A549 (cell line): ENCODE measurements at regions of chr1 and their contacts with region 1.

Region 1: GRCh38 chr1:202184750-202185460 is 8.7 kb upstream of the LGR6 start:
- DNase-seq: peak; percentile 91 to 92
- ATAC-seq: peak; percentile 74 to 91
- H3K4me3 ChIP-seq: no peak overlapping the region
- H3K27ac ChIP-seq: peak overlapping the region in 1 of 2 experiments; percentile 42; a peak in 1 of 6 replicates
- H3K4me1 ChIP-seq: peaks cover 11% of the 10 kb centered on the region
- CTCF ChIP-seq: peak; percentile 91
- EP300 ChIP-seq: no peak
- POLR2A ChIP-seq: no peak
- RAD21 ChIP-seq: peak; percentile 78 to 84

Region 2: GRCh38 chr1:202146993-202147392 is 37.9 kb before region 1 on chr1:
- CTCF ChIA-PET with region 1: no interaction called
- POLR2A ChIA-PET with region 1: no interaction called
- DNase-seq: no peak
- ATAC-seq: no peak
- H3K4me3 ChIP-seq: no peak overlapping the region
- H3K27ac ChIP-seq: no peak overlapping the region
- H3K4me1 ChIP-seq: peaks cover 13% of the 10 kb centered on the region; the same call in 2 of the 3 replicates
- CTCF ChIP-seq: no peak
- EP300 ChIP-seq: no peak
- POLR2A ChIP-seq: no peak
- RAD21 ChIP-seq: no peak

Region 3: GRCh38 chr1:202210385-202210784 is 25.5 kb after region 1 on chr1:
- CTCF ChIA-PET with region 1: interaction called, 25 read pairs
- POLR2A ChIA-PET with region 1: no interaction called
- DNase-seq: peak in 1 of 2 experiments; percentile 52
- ATAC-seq: peak; percentile 73 to 75
- H3K4me3 ChIP-seq: no peak overlapping the region
- H3K27ac ChIP-seq: no peak overlapping the region
- H3K4me1 ChIP-seq: peaks cover 11% of the 10 kb centered on the region
- CTCF ChIP-seq: 0 out of 3 replicates have a peak, but pooled peaks have one; percentile 7
- EP300 ChIP-seq: no peak
- POLR2A ChIP-seq: no peak
- RAD21 ChIP-seq: peak in 1 of 2 experiments; percentile 29; a peak in 3 of 5 replicates

Region 4: GRCh38 chr1:202264300-202264699 is 79.4 kb after region 1 on chr1:
- CTCF ChIA-PET with region 1: interaction called, 10 read pairs
- POLR2A ChIA-PET with region 1: no interaction called
- DNase-seq: no peak
- ATAC-seq: no peak
- H3K4me3 ChIP-seq: no peak overlapping the region
- H3K27ac ChIP-seq: no peak overlapping the region
- H3K4me1 ChIP-seq: no peaks in the 10 kb centered on the region
- CTCF ChIP-seq: no peak
- EP300 ChIP-seq: no peak
- POLR2A ChIP-seq: no peak
- RAD21 ChIP-seq: no peak

Region 5: GRCh38 chr1:202291961-202292712 is 107.2 kb after region 1 on chr1:
- CTCF ChIA-PET with region 1: interaction called, 12 read pairs
- POLR2A ChIA-PET with region 1: no interaction called
- DNase-seq: peak; percentile 57 to 68
- ATAC-seq: peak; percentile 69 to 83
- H3K4me3 ChIP-seq: no peak overlapping the region
- H3K27ac ChIP-seq: peak overlapping the region; percentile 45 to 59; a peak in 5 of 6 replicates
- H3K4me1 ChIP-seq: peaks cover 22% of the 10 kb centered on the region
- CTCF ChIP-seq: no peak
- EP300 ChIP-seq: no peak
- POLR2A ChIP-seq: no peak
- RAD21 ChIP-seq: no peak

Region 6: GRCh38 chr1:202315576-202316168 is 130.8 kb after region 1 on chr1:
- CTCF ChIA-PET with region 1: interaction called, 350 read pairs
- POLR2A ChIA-PET with region 1: interaction called, 4 read pairs
- DNase-seq: peak; percentile 80 to 89
- ATAC-seq: peak; percentile 85 to 96; a peak in 5 of 6 replicates
- H3K4me3 ChIP-seq: no peak overlapping the region
- H3K27ac ChIP-seq: peak overlapping the region in 1 of 2 experiments; percentile 26; a peak in 2 of 6 replicates
- H3K4me1 ChIP-seq: peaks cover 5% of the 10 kb centered on the region; the same call in 1 of the 3 replicates
- CTCF ChIP-seq: peak; percentile 98
- EP300 ChIP-seq: no peak
- POLR2A ChIP-seq: no peak
- RAD21 ChIP-seq: peak; percentile 98 to 99